GM23248 (cell line): ENCODE measurements at regions of chr15 and their contacts with region 1.

Region 1: GRCh38 chr15:31489801-31490646 is 163.4 kb downstream of the KLF13 start:
- DNase-seq: peak; percentile 82
- H3K4me3 ChIP-seq: no peak overlapping the region
- H3K27ac ChIP-seq: no peak overlapping the region
- H3K4me1 ChIP-seq: peaks cover 16% of the 10 kb centered on the region
- H3K27me3 ChIP-seq: no peaks in the 10 kb centered on the region

Region 2: DNA sequence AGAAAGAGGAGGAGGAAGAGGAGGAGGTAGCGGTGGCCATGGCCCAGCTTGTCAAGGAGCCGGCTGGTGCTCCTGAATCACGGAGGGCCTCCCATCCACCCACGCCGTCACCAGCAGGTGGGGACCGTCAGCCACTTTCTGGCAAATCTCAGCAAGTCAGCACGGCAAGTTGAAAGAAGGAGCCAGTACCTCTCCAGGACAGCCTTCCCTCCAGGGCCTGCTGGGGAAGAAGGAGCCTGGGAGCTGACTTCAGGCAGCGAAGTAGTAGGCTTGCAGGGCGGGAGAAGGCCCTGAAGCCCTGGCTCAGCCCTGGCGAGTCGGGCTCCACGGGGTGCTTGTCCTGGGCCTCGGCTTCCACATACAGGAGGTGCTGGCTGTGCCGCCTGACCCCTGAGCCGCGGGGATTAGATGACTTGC is 289.3 kb before region 1 on chr15:
- in situ Hi-C with region 1: loop called (anchors 10 kb)
- DNase-seq: peak; percentile 12
- H3K4me3 ChIP-seq: no peak overlapping the region
- H3K27ac ChIP-seq: no peak overlapping the region
- H3K4me1 ChIP-seq: no peaks in the 10 kb centered on the region
- H3K27me3 ChIP-seq: peaks cover 12% of the 10 kb centered on the region; the same call in 1 of the 2 replicates